Mammary epithelial cell (primary cell): ENCODE measurements at regions of chr2 and their contacts with region 1.

Region 1: GRCh38 chr2:135531231-135532228 is at the start of gene R3HDM1:
- DNase-seq: peak; percentile 100
- H3K4me3 ChIP-seq: peak within 1 kb of the TSS; percentile 88 to 93 (median 89)
- H3K27ac ChIP-seq: peak within 1 kb of the TSS; percentile 95
- H3K4me1 ChIP-seq: peaks cover 34% of the 10 kb centered on the region
- H3K27me3 ChIP-seq: no peaks in the 10 kb centered on the region
- CTCF ChIP-seq: peak in 1 of 2 donors; percentile 26
- total RNA-seq, gene R3HDM1: 17.3 to 45.2 TPM

Region 2: DNA sequence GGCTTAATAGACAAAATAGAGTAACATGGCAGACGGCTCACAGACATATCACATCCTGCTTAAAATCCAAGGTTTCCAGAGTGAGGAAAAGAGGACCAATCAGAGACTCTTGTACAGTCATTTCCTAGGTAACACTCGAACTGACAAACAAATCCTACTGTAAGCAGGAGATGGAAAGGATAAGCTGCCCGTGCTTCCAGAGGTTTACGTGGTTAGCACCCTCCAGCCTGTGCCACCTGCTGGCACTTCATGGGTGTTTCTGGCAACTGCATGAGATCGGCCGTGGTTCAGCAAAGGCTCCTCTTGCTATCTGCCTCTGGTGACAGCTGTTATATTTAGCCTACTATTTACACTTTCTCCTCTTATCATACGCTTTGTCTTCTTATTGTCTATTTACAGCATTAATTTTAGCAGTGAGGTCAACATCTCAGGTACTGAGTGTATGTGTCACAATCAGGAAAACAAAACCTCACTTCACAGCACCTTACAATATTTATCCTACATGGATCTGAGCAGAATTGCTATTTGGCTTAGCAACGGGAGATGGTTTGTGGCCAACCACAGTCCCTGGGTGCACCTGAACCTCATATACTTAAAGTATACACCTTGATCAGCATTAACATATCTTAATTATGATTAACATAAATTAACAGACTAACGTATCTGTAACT is 1039.6 kb before region 1 on chr2:
- CTCF ChIA-PET with region 1: interaction called, 10 read pairs
- dilution Hi-C with region 1: no loop called
- in situ Hi-C with region 1: no loop called
- intact Hi-C with region 1: no loop called
- DNase-seq: peak; percentile 4
- H3K4me3 ChIP-seq: no peak overlapping the region
- H3K27ac ChIP-seq: no peak overlapping the region
- H3K4me1 ChIP-seq: no peaks in the 10 kb centered on the region
- H3K27me3 ChIP-seq: no peaks in the 10 kb centered on the region
- CTCF ChIP-seq: peak; percentile 5 to 11

Region 3: DNA sequence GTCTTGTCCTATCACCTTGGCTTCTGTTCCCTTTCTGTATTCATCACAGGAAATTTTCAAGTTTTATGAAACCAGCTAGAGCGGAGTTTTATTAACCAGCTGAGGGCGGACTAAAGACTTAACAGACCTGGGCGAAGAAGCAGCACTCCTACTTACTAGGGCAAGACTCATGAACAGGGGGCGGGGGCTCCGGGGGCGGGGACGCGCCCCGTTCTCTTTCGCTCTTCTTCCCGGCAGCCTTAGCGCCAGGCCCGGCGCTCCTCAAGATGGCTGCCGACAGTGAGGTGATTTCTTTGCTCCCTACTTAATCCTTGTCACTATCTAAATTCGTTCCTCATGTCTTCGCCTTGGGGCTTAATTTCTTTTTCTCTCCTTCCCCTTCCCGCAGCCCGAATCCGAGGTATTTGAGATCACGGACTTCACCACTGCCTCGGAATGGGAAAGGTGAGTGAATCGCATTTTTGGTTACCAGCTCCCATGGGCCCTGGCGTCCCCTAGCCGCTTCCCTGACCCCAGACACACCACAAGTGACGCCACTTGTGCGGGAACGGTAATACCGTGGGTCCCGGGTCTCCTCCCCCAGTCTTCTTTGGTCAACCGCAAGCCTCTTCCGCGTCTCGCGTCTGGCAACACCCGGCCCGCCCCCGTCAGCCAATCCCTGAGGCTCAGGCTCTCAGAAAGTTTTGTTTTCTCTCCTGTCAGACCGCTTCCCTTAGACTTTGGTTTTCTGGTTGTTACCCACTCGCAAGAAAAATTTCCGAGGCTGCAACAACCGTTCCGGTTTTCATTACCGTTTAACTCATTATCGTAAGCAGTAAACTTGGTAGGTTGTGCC is 479.3 kb before region 1 on chr2 and contains the start of gene RAB3GAP1:
- CTCF ChIA-PET with region 1: no interaction called
- dilution Hi-C with region 1: no loop called
- in situ Hi-C with region 1: no loop called
- intact Hi-C with region 1: loop called (anchors 2 kb)
- DNase-seq: peak; percentile 83
- H3K4me3 ChIP-seq: peak within 1 kb of the TSS; percentile 76 to 99 (median 99)
- H3K27ac ChIP-seq: peak within 1 kb of the TSS; percentile 99
- H3K4me1 ChIP-seq: peaks cover 20% of the 10 kb centered on the region
- H3K27me3 ChIP-seq: no peaks in the 10 kb centered on the region
- CTCF ChIP-seq: no peak
- total RNA-seq, gene RAB3GAP1: 74.9 to 116 TPM

Region 4: DNA sequence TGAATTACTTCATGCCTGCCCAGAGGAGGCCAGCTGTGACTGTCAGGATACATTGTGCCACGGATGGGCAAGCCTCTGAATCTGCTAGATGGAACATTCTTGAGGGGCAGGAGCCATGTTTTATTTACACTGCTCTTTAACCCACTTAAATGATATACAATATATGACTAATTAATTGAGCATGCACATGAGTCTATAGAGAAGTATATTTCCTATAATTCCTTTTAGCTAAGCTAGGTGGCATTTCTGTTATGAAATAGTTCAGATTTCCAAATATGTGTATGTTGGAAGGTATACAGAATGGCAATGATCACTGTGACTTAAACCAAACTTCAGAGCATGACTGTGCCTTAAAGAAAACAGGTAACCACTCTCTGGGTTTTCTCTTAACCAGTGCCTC is 347.7 kb before region 1 on chr2:
- CTCF ChIA-PET with region 1: no interaction called
- dilution Hi-C with region 1: no loop called
- in situ Hi-C with region 1: no loop called
- intact Hi-C with region 1: loop called (anchors 10 kb)
- DNase-seq: no peak
- H3K4me3 ChIP-seq: no peak overlapping the region
- H3K27ac ChIP-seq: no peak overlapping the region
- H3K4me1 ChIP-seq: no peaks in the 10 kb centered on the region
- H3K27me3 ChIP-seq: no peaks in the 10 kb centered on the region
- CTCF ChIP-seq: no peak

Region 5: GRCh38 chr2:135258193-135258592 is 273.3 kb before region 1 on chr2:
- CTCF ChIA-PET with region 1: no interaction called
- dilution Hi-C with region 1: no loop called
- in situ Hi-C with region 1: no loop called
- intact Hi-C with region 1: loop called (anchors 5 kb)
- DNase-seq: peak; percentile 6
- H3K4me3 ChIP-seq: no peak overlapping the region
- H3K27ac ChIP-seq: peak overlapping the region; percentile 74
- H3K4me1 ChIP-seq: peaks cover 27% of the 10 kb centered on the region
- H3K27me3 ChIP-seq: no peaks in the 10 kb centered on the region
- CTCF ChIP-seq: peak in 1 of 2 donors; percentile 19

Region 6: GRCh38 chr2:135299656-135300244 is 231.8 kb before region 1 on chr2:
- CTCF ChIA-PET with region 1: no interaction called
- dilution Hi-C with region 1: no loop called
- in situ Hi-C with region 1: no loop called
- intact Hi-C with region 1: no loop called
- DNase-seq: peak; percentile 57
- H3K4me3 ChIP-seq: no peak overlapping the region
- H3K27ac ChIP-seq: peak overlapping the region; percentile 31
- H3K4me1 ChIP-seq: peaks cover 24% of the 10 kb centered on the region
- H3K27me3 ChIP-seq: no peaks in the 10 kb centered on the region
- CTCF ChIP-seq: no peak

Region 7: DNA sequence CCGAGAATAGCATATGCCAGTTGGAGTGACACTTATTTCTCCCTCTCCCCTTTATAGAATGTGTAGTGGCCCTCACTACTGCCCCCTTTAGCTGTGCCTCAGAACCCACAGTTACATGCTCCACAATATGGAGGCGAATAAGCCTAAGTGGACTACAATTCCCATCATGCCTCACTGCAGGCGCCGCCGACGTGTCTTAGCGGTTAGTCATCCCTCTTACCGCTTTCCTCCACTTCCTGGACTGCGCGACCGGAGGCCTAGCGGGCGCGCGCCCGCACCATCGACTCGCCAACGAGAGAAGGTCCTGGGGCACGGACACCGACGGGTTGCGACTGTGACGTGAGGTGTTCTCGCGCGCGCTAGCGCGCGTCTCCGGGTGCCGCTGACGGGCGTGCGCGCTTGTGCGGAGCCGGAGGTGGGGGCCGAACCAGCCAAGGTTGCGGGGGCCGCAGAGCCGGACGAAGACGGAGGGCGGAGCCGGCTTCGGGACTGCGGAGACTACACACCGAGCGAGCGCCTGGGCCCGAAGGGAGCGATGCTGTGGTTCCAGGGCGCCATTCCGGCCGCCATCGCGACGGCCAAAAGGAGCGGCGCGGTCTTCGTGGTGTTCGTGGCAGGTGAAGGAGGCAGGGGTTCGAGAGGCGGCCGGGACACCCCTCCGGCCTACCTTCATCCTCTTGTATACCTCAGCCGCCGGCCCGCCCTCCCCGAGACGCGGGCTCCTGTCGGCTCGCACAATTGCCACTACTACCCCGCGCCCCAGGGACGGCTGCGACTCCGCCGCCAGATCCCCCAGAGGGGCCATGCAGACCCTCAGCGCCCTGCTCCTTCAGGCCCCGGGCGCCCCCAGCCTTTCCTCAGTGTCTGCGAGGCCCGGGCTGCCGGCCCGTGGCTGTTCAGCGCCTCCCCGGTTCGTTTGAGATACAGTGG is 210.1 kb after region 1 on chr2 and contains the start of gene UBXN4:
- CTCF ChIA-PET with region 1: no interaction called
- dilution Hi-C with region 1: no loop called
- in situ Hi-C with region 1: no loop called
- intact Hi-C with region 1: loop called (anchors 2 kb)
- DNase-seq: peak; percentile 99
- H3K4me3 ChIP-seq: peak within 1 kb of the TSS; percentile 72 to 97 (median 94)
- H3K27ac ChIP-seq: peak within 1 kb of the TSS; percentile 91
- H3K4me1 ChIP-seq: peaks cover 19% of the 10 kb centered on the region
- H3K27me3 ChIP-seq: no peaks in the 10 kb centered on the region
- CTCF ChIP-seq: peak; percentile 34 to 43
- total RNA-seq, gene UBXN4: 72.2 to 72.9 TPM